ENCODE measurements at regions of chr12 and their contacts with region 1.

Region 1: GRCh38 chr12:12696562-12697383 is 790 bp upstream of the GPR19 start:
- DNase-seq: peak; percentile 96
- H3K4me3 ChIP-seq: peak overlapping the region; percentile 87
- H3K27ac ChIP-seq: peak overlapping the region; percentile 98
- H3K4me1 ChIP-seq: 0 out of 2 replicates have a peak, but pooled peaks cover 9% of the 10 kb centered on the region
- H3K27me3 ChIP-seq: no peaks in the 10 kb centered on the region

Region 2: DNA sequence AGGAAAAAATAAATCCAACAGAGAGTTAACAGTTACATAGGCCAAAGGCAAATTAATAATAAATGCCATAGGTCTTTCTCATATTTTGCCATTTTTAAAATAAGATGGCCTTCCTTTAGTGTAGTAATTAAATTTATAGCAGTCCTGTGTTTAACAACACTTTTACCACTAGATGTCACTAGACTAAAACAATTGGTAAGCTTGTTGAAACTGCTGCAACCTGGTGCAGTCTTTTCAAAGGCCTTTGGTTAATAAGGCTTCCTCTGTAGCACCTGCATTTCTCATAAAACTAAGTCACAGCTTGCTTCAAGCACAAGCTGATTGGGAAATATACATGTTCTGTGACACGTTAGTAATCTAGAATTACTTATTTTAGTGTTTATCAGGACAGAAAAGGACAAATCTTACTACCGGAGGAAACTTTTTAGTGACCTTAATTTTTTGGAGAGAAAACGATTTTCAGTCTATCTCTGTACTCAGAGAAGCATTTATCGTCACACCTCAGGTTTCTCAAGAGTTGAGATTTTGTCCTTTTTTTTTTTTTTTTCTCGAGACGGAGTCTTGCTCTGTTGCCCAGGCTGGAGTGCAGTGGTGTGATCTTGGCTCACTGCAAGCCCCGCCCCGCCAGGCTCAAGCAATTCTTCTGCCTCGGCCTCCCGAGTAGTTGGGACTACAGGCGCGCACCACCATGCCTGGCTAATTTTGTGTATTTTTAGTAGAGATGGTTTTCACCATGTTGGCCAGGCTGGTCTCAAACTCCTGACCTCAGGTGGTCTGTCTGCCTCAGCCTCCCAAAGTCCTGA is 319.9 kb before region 1 on chr12:
- in situ Hi-C with region 1: loop called (anchors 5 kb)
- DNase-seq: peak; percentile 84
- H3K4me3 ChIP-seq: no peak overlapping the region
- H3K27ac ChIP-seq: no peak overlapping the region
- H3K4me1 ChIP-seq: peaks cover 12% of the 10 kb centered on the region
- H3K27me3 ChIP-seq: no peaks in the 10 kb centered on the region